ENCODE measurements at regions of chr2 and their contacts with region 1.

Region 1: GRCh38 chr2:178298785-178299212 is 104.5 kb downstream of the OSBPL6 start:
- DNase-seq: peak; percentile 48
- ATAC-seq: no peak; the same call in 1 of the 2 replicates
- H3K4me3 ChIP-seq: no peak overlapping the region
- H3K27ac ChIP-seq: no peak overlapping the region
- H3K4me1 ChIP-seq: no peaks in the 10 kb centered on the region
- H3K27me3 ChIP-seq: no peaks in the 10 kb centered on the region
- CTCF ChIP-seq: no peak
- POLR2A ChIP-seq: no peak
- RAD21 ChIP-seq: no peak

Region 2: DNA sequence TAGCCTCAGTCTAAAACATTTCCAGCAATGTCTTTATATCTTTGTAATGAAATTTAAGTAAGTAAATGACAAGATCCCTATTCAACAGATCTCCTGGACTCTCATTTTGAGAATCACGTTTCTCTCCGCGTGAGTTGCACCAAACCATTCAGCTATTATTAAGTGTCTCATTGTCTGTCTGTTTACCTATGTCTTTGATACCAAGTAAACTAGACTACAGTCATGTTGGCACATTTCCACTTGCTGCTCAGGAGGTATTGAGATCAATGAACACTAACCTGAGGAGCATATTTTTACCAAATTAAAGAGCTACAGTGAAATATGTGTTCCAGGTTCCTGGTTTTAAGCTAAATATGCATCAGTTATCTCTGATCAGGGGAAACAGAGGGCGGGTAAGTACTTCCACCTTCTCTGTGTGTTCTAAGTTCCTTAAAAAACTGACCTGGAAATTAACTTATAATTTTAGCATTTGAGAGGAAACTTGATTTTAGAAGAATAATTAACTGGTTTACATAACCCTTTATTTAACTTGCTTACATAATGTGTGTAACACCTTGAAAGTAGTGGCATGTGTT is 21.3 kb after region 1 on chr2:
- CTCF ChIA-PET with region 1: no interaction called
- POLR2A ChIA-PET with region 1: interaction called, 15 read pairs
- dilution Hi-C with region 1: no loop called
- in situ Hi-C with region 1: no loop called
- intact Hi-C with region 1: no loop called
- DNase-seq: no peak
- ATAC-seq: no peak
- H3K4me3 ChIP-seq: no peak overlapping the region
- H3K27ac ChIP-seq: no peak overlapping the region
- H3K4me1 ChIP-seq: no peaks in the 10 kb centered on the region
- H3K27me3 ChIP-seq: no peaks in the 10 kb centered on the region
- CTCF ChIP-seq: no peak
- POLR2A ChIP-seq: no peak
- RAD21 ChIP-seq: no peak